HEK293 (cell line): ENCODE measurements at regions of chr16 and their contacts with region 1.

Region 1: GRCh38 chr16:67428146-67428731 is 2.7 kb upstream of the HSD11B2 start:
- H3K4me3 ChIP-seq: no peak overlapping the region
- H3K27ac ChIP-seq: no peak overlapping the region
- H3K4me1 ChIP-seq: no peaks in the 10 kb centered on the region; the same call in 1 of the 2 replicates
- CTCF ChIP-seq: peak; percentile 77

Region 2: GRCh38 chr16:67260426-67261075 is 167.7 kb before region 1 on chr16:
- CTCF ChIA-PET with region 1: interaction called, 14 read pairs
- POLR2A ChIA-PET with region 1: no interaction called
- H3K4me3 ChIP-seq: no peak overlapping the region
- H3K27ac ChIP-seq: no peak overlapping the region
- H3K4me1 ChIP-seq: no peaks in the 10 kb centered on the region
- CTCF ChIP-seq: peak; percentile 71

Region 3: DNA sequence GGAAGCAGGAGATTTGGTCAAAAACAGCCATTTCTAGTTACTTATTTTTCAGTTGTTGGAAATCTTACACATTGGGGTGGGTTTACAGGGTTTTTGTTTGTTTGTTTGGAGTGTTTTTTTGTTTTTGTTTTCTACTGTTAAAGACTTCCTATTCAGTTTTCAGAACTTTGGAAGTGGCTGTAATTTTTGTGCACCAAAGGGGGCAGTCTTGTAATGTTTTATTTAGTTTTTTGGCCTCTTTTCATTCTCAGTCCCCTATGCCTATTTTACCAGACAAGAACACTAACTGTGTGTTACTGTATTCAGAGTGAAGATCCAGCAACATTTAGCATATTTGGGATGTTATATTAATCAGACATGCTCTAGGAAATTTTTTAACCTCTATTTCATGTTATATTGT is 55.6 kb before region 1 on chr16:
- CTCF ChIA-PET with region 1: interaction called, 13 read pairs
- POLR2A ChIA-PET with region 1: no interaction called
- H3K4me3 ChIP-seq: no peak overlapping the region
- H3K27ac ChIP-seq: no peak overlapping the region
- H3K4me1 ChIP-seq: no peaks in the 10 kb centered on the region
- CTCF ChIP-seq: peak; percentile 41; the same call in 1 of the 2 replicates

Region 4: GRCh38 chr16:67415872-67416793 is 12.1 kb before region 1 on chr16 and contains the start of gene ZDHHC1:
- CTCF ChIA-PET with region 1: interaction called, 21 read pairs
- POLR2A ChIA-PET with region 1: interaction called, 6 read pairs
- H3K4me3 ChIP-seq: peak within 1 kb of the TSS; percentile 66
- H3K27ac ChIP-seq: peak within 1 kb of the TSS; percentile 88
- H3K4me1 ChIP-seq: peaks cover 3% of the 10 kb centered on the region; the same call in 1 of the 2 replicates
- CTCF ChIP-seq: peak; percentile 80

Region 5: GRCh38 chr16:67447508-67448076 is 19.4 kb after region 1 on chr16:
- CTCF ChIA-PET with region 1: interaction called, 31 read pairs
- POLR2A ChIA-PET with region 1: interaction called, 3 read pairs
- H3K4me3 ChIP-seq: no peak overlapping the region
- H3K27ac ChIP-seq: no peak overlapping the region
- H3K4me1 ChIP-seq: no peaks in the 10 kb centered on the region
- CTCF ChIP-seq: no peak

Region 6: GRCh38 chr16:67461600-67462592 is 33.7 kb after region 1 on chr16:
- CTCF ChIA-PET with region 1: interaction called, 99 read pairs
- POLR2A ChIA-PET with region 1: interaction called, 3 read pairs
- H3K4me3 ChIP-seq: no peak overlapping the region
- H3K27ac ChIP-seq: no peak overlapping the region
- H3K4me1 ChIP-seq: no peaks in the 10 kb centered on the region
- CTCF ChIP-seq: no peak